H1 (cell line): ENCODE measurements at regions of chr22 and their contacts with region 1.

Region 1: DNA sequence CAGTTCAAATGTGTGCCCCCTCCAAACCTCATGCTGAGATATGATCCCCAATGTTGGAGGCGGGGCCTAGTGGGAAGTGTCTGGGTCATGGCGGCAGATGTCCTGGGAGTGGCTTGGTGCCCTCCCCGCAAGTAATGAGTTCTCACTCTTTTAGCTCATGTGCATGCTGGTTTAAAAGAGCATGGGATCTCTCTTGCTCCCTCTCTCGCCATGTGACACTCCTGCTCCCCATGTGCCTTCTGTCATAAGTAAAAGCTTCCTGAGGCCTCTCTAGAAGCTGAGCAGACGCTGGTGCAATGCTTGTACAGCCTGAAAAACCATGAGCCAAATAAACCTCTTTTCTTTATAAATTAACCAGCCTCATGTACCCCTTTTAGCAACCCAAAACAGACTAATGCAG is 98.8 kb downstream of the SGSM3 start:
- DNase-seq: no peak
- H3K4me3 ChIP-seq: no peak overlapping the region
- H3K27ac ChIP-seq: no peak overlapping the region
- H3K4me1 ChIP-seq: peaks cover 0 to 7% (median 4%) of the 10 kb centered on the region in 4 experiments; a peak in 3 of 7 replicates
- H3K27me3 ChIP-seq: no peaks in the 10 kb centered on the region
- CTCF ChIP-seq: no peak
- EP300 ChIP-seq: no peak
- POLR2A ChIP-seq: no peak
- RAD21 ChIP-seq: no peak

Region 2: DNA sequence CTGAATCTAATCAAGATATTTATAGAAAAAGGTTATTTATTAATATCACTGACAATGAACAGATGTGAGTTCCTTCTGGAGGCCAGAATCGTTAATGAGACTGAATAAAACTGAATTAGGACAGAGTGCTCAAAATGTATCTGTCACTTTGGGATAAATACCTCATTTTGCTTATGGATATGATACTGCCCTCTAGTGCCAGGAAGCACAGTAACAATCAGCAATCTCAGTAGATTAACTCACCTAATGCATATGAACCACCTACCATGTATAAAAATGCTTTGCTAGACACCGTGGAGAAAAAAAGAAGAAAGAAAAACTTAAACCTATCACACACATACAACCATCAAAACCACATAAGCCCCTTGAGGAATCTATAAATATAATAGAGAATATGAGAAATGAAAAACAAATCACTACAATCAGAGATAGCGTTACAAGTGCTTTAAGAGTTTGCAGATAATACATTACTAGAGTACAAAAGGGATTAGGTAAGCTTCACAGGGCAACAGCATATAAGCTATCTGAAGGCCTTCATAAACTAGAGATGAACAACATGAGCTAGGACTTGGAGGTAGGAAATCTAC is 18.6 kb after region 1 on chr22:
- CTCF ChIA-PET with region 1: interaction called, 66 read pairs
- POLR2A ChIA-PET with region 1: interaction called, 3 read pairs
- DNase-seq: no peak
- H3K4me3 ChIP-seq: no peak overlapping the region
- H3K27ac ChIP-seq: no peak overlapping the region
- H3K4me1 ChIP-seq: no peaks in the 10 kb centered on the region; a peak in 2 of 7 replicates
- H3K27me3 ChIP-seq: no peaks in the 10 kb centered on the region
- CTCF ChIP-seq: peak in 2 of 3 experiments; percentile 44 to 79; a peak in 2 of 4 replicates
- EP300 ChIP-seq: no peak
- POLR2A ChIP-seq: no peak
- RAD21 ChIP-seq: peak; percentile 45 to 54